ENCODE measurements at regions of chr10 and their contacts with region 1.

Region 1: DNA sequence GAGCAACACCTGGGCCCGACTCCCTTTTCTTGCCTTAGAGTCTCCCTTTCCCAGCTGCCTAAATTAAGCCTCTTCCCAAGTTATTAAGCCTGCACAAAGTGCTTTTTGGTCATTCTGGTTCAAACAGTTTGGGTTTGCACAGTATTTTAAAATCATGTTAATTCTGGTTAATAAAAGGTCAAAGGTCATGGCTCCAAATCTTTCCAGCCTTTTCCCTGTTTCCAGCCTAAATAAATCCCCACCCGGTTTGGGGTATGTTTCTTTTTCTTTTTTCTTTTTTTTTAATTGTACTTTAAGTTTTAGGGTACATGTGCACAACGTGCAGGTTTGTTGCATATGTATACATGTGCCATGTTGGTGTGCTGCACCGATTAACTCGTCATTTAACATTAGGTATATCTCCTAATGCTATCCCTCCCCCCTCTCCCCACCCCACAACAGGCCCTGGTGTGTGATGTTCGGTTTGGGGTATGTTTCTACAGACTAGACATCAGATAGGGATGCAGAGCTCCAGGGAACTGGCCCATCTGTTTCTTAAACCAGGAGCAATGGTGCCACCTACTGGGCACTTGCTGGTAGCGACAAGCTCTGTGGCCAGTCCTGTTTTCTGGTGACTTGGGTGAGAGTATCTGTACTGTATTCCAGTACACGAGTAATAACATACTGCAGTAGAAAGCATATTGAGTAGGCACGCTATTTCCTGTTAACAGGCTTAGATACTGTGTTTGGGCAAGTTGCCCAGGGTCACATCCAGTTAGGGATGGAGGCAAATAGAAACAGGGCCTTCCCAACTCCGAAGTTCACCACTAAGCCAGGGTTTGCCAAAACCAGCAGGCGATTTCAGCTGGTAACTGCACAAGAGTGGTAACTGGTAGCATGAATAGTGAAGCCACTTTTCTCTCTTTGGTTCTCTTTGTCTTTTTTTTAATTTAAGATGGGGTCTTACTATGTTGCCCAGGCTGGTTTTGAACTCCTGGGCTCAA is 60.6 kb upstream of the TRIM8 start:
- H3K4me3 ChIP-seq: no peak overlapping the region
- H3K27ac ChIP-seq: no peak overlapping the region
- H3K4me1 ChIP-seq: peaks cover 15% of the 10 kb centered on the region
- CTCF ChIP-seq: peak; percentile 76

Region 2: DNA sequence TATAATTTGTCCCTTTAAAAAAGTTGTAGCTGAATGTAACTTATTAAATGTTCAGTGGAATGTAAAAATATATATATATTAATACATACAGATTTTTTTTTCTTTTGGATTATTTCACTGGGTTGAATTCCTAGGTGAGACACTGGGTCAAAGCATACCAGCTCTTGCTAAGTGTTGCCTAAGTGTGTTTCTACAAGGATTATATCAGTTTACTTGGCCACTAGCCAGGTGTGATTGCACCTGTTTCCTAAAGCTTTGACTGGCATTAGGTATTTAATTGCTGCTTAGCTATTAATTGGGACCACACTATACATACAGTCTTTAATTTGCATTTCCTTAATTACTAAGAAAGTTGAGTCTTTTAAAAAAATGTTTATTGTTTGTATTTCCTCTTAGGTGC is 363.1 kb before region 1 on chr10:
- CTCF ChIA-PET with region 1: no interaction called
- POLR2A ChIA-PET with region 1: no interaction called
- H3K4me3 ChIP-seq: no peak overlapping the region
- H3K27ac ChIP-seq: no peak overlapping the region
- H3K4me1 ChIP-seq: peaks cover 3% of the 10 kb centered on the region; the same call in 1 of the 2 replicates
- CTCF ChIP-seq: no peak

Region 3: GRCh38 chr10:102394079-102394800 is 189.5 kb before region 1 on chr10:
- CTCF ChIA-PET with region 1: interaction called, 16 read pairs
- POLR2A ChIA-PET with region 1: no interaction called
- H3K4me3 ChIP-seq: peak overlapping the region; percentile 58
- H3K27ac ChIP-seq: no peak overlapping the region; the same call in 1 of the 2 replicates
- H3K4me1 ChIP-seq: peaks cover 5% of the 10 kb centered on the region; the same call in 1 of the 2 replicates
- CTCF ChIP-seq: peak; percentile 94

Region 4: DNA sequence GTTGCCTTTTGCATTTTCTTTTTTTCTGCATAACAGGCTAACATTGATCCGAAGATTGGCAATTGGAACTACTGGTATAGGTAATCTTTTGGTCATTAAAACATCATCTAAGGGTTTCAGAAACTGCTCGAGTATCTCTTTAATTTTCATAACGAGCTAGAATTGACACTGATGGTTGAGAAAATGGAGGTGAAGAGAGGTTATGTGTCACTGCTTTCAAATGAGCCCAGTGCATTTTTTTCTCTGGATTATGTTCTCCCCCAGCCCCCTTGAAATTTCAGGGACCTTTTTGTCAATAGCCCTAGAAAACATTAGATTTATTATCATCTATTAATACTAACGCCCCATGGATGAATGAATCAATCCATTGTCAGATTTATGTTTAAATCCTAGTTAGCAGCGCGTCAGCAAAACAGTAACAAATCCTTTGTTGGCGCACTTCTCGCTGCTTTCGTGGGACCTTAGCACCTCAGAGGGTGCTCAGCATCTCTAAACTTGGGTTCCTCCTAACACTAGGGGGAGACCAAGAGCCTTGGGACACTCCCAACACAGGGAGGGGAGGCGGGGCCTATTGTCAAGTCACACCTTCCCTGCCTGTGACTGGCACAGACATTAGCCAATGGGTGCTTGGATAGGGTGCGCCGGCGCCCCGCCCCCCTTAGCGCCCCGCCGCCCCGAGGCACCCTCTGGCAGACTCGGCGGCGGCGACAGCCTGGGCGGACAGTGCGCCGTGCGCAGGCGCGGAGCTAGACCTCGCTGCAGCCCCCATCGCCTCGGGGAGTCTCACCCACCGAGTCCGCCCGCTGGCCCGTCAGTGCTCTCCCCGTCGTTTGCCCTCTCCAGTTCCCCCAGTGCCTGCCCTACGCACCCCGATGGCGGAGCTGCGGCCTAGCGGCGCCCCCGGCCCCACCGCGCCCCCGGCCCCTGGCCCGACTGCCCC is 80.2 kb before region 1 on chr10 and contains the start of gene SUFU:
- CTCF ChIA-PET with region 1: interaction called, 83 read pairs
- POLR2A ChIA-PET with region 1: interaction called, 22 read pairs
- H3K4me3 ChIP-seq: peak within 1 kb of the TSS; percentile 93
- H3K27ac ChIP-seq: peak within 1 kb of the TSS; percentile 49; the same call in 1 of the 2 replicates
- H3K4me1 ChIP-seq: peaks cover 5% of the 10 kb centered on the region
- CTCF ChIP-seq: peak; percentile 95

Region 5: GRCh38 chr10:102596506-102596971 is 12.8 kb after region 1 on chr10:
- CTCF ChIA-PET with region 1: interaction called, 16 read pairs
- POLR2A ChIA-PET with region 1: no interaction called
- H3K4me3 ChIP-seq: no peak overlapping the region
- H3K27ac ChIP-seq: no peak overlapping the region
- H3K4me1 ChIP-seq: no peaks in the 10 kb centered on the region
- CTCF ChIP-seq: peak; percentile 78; the same call in 1 of the 2 replicates

Region 6: DNA sequence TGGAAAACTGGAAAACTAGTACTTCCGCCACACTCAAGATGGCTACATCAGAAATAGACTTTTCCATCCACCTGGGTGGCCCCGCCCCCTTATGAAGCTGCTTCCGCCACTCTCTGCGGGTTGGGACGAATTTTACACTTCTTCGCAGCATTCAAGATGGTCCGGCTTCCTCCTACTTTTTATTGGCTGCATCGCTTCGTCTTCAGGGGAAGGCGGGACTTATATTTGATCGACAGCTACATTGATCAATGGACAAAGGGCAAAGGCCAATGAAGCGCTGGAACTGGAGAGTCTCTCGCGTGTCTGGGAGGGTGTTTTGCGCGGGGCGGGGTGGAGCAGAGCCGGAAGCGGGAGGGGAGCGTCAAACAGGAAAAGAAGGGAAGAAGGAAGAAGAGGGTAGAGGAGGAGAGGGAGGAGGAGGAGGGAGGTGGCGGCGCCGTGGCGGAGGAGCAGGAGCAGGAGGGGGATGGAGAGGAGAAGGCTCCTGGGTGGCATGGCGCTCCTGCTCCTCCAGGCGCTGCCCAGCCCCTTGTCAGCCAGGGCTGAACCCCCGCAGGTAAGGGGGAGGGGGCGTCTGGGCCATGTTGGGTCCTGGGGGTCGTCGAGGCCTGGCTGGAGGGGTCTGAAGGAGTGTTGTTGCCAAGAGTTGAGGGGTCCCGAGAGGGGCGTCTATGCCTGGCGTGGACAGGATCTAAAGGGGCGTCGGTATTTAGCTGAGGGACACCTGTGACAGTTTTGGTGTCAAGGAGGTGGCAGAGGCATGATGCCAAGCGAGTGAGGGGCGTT is 160.1 kb after region 1 on chr10 and contains the start of gene WBP1L:
- CTCF ChIA-PET with region 1: no interaction called
- POLR2A ChIA-PET with region 1: no interaction called
- H3K4me3 ChIP-seq: peak within 1 kb of the TSS; percentile 66
- H3K27ac ChIP-seq: peak within 1 kb of the TSS; percentile 59
- H3K4me1 ChIP-seq: no peaks in the 10 kb centered on the region
- CTCF ChIP-seq: 0 out of 2 replicates have a peak, but pooled peaks have one; percentile 32

Measured in HEK293 (cell line).